ENCODE measurements at regions of chr17 and their contacts with region 1.

Region 1: DNA sequence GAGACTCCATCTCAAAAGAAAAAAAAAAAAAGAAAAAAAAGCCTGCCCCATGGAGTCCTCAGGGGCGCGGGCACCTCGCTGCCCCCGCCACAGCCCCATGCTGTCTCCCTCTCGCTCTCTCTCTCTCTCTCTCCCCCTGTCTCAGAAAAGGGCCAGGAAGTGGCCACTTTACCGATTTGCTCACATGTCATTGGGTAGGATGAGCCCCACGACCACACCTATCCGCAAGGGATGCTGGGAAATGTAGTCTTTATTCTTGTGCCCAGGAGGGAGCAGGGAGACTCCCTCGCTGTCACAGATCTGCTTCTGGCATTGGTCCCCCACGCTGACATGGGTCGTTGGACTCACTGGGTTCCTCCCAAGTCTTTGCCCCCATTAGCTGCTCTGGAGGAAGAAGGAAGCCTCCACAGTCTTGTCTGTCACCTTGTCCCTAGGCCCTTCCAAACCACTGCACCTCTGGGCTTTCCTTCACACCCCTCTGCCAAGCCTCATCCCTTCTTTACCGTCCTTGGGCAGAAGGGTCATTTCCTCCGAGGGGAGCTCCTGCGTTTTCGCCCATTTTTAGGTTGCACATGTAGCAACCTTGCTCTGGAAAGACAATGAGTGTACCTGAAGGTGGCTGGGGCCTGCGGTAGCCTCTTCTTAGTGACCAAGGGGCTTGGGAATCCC is 6.9 kb upstream of the GJD3 start:
- DNase-seq: no peak
- H3K27ac ChIP-seq: no peak overlapping the region
- CTCF ChIP-seq: no peak

Region 2: GRCh38 chr17:40451420-40451819 is 80.0 kb after region 1 on chr17:
- CTCF ChIA-PET with region 1: interaction called, 3 read pairs
- POLR2A ChIA-PET with region 1: interaction called, 13 read pairs
- DNase-seq: no peak
- H3K27ac ChIP-seq: peak overlapping the region; percentile 67
- CTCF ChIP-seq: no peak